Body of pancreas (tissue), 4 donors: ENCODE measurements at regions of chr20 and their contacts with region 1.

Region 1: DNA sequence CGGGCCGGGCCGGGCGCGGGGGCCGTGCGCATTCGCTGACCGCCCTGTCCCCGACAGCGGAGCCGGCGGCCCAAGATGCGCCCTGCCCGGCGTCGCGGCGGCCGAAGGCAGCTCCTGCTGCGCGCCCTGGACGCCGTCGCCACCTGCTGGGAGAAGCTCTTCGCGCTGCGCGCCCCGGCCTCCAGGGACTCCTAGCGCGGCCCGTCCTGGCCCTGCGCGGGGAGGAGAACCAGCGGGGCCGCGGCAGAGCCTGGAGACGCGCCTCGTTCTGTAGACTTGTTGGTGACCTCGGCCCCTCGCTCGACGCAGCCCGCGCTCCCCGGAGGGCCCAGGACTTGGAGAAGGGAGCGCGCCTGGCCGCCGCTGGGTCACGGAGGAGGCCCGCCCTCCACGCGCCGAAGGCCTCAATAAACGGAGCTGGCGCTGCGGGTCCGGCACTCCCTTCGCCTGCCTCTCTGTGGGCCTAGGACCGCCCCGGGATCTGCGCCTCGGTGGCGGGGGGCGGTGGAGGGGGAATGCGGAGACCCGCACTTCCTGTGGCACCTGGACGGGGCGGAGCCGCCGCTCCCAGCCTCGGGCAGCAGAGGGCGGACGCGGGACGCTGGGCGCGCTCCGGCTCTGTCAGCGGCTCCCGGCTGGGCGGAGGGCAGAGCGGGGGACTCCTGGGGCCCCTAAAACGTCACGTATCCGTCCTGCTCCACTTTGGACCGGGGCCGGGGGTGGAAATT is 2.7 kb downstream of the C20orf204 start:
- DNase-seq: peak; percentile 75 to 82 (median 77)
- ATAC-seq: peak; percentile 85
- H3K4me3 ChIP-seq: peak overlapping the region in 1 of 2 donors; percentile 22
- H3K27ac ChIP-seq: peak overlapping the region; percentile 25 to 82 (median 58)
- H3K4me1 ChIP-seq: peaks cover 34% of the 10 kb centered on the region
- H3K27me3 ChIP-seq: peaks cover 0 to 5% of the 10 kb centered on the region in 2 donors
- CTCF ChIP-seq: peak; percentile 66 to 79 (median 75)
- POLR2A ChIP-seq: peak in 1 of 3 donors; percentile 52

Region 2: GRCh38 chr20:63782051-63782471 is 256.7 kb before region 1 on chr20:
- intact Hi-C with region 1: no loop called
- DNase-seq: no peak
- ATAC-seq: no peak
- H3K4me3 ChIP-seq: no peak overlapping the region
- H3K27ac ChIP-seq: no peak overlapping the region
- H3K4me1 ChIP-seq: no peaks in the 10 kb centered on the region
- H3K27me3 ChIP-seq: no peaks in the 10 kb centered on the region
- CTCF ChIP-seq: no peak
- POLR2A ChIP-seq: no peak

Region 3: DNA sequence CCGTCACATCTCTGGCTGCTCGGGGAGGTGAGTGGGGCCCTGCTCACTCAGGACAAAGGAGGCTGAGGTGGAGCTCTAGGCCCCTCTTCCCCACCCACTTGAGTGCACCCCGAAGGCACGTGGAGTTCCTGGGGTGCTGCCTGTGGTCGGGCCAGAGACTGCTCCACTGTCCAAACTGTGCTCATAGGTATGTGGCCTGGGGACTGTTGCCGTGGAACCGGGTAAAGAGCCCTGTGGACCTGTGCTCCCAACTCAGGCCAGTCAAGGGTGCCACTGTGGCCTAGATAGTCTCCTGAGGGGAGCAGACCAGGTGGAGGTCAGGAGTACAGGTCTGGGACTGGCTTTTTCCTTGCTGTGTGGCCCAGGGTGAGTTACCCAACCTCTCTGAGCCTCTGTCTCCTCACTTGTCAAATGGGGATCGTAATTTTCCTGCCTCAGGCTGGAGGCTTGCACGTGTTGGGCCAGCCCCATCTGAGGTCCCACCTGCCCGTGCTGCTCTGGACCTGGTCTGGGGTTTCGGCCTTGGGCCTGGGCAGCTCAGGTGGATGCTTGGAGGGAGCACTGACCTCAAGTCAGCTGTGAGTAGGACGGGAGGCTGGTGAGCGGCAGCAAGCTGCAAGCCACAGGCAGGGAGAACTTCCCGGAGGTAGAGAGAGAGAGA is 81.1 kb after region 1 on chr20:
- intact Hi-C with region 1: loop called (anchors 5 kb)
- DNase-seq: peak in 1 of 4 donors; percentile 10
- ATAC-seq: peak; percentile 5
- H3K4me3 ChIP-seq: no peak overlapping the region
- H3K27ac ChIP-seq: no peak overlapping the region
- H3K4me1 ChIP-seq: peaks cover 8% of the 10 kb centered on the region
- H3K27me3 ChIP-seq: peaks cover 0 to 7% of the 10 kb centered on the region in 2 donors
- CTCF ChIP-seq: no peak
- POLR2A ChIP-seq: no peak